Endothelial cell of umbilical vein (primary cell): ENCODE measurements at regions of chr19 and their contacts with region 1.

Region 1: DNA sequence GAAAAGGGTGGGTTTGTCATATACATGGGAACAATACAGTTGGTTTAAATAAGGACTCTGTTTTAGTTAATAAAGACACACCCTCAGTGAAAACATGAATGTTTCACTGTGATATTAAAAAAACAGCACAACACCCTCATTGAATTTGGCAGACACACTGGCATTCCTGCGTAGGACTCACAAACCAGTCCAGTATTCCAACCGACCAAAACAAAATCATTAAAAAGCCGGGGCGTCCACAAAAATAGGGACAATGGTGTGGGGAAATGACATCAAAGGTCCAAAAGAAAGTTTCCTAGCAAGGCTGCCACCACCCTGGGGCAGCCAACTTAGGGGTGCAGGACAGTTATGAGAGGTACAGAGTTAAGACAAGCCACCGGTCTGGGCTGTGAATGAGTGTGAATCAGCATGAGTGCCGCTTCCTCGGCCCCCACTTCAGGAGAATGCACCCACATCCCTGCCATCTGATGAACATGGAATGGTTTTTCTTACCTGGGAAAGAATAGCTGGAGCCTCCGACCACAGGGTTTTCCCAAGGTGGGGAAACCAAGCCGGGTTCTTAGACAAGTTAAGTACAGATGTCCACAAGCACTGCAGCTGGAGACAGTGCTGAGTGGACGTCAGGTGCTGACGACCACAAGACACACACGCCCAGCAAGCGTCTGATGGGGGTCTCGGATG is 73.3 kb downstream of the KLF2 start:
- DNase-seq: peak; percentile 59
- H3K4me3 ChIP-seq: no peak overlapping the region
- H3K27ac ChIP-seq: no peak overlapping the region
- H3K4me1 ChIP-seq: no peaks in the 10 kb centered on the region
- H3K27me3 ChIP-seq: no peaks in the 10 kb centered on the region
- CTCF ChIP-seq: no peak
- POLR2A ChIP-seq: no peak

Region 2: DNA sequence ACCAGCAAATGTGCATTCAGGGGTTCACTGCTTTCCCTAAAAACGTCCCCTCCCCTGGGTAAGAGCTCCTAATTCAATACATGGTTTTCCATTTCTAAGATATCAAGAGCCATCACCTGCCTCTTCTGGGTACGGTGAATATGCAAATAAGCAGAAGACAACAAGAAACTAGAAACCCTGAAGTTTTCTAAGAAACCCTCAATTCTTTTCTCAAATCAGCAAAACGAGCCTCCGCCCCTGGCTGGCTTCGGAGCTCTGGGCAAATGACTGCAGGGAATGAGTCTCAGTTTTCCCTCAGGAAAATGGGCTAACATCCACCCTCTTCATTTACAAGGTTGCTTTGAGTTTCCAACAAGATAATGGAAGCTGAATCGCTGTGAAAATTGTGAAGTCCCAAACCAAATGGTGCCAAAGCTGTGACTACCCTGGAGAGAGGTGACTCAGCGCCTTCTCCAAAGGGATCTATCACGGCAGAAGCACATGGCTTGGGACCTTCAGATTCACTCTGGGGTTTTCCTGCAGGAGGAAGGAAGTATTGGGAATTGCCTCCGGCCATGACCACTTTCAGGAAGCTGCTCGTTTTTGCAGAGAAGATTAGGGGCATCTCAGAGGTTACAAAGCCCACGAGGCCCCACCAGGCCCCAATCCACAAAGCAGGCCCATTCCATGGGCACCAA is 46.7 kb before region 1 on chr19:
- CTCF ChIA-PET with region 1: no interaction called
- POLR2A ChIA-PET with region 1: no interaction called
- dilution Hi-C with region 1: no loop called
- intact Hi-C with region 1: no loop called
- DNase-seq: peak; percentile 77
- H3K4me3 ChIP-seq: no peak overlapping the region
- H3K27ac ChIP-seq: peak overlapping the region; percentile 51
- H3K4me1 ChIP-seq: peaks cover 32% of the 10 kb centered on the region
- H3K27me3 ChIP-seq: no peaks in the 10 kb centered on the region
- CTCF ChIP-seq: no peak
- POLR2A ChIP-seq: no peak

Region 3: GRCh38 chr19:16417660-16418596 is 20.0 kb after region 1 on chr19:
- CTCF ChIA-PET with region 1: no interaction called
- POLR2A ChIA-PET with region 1: no interaction called
- dilution Hi-C with region 1: no loop called
- intact Hi-C with region 1: loop called (anchors 2 kb)
- DNase-seq: peak; percentile 51
- H3K4me3 ChIP-seq: no peak overlapping the region
- H3K27ac ChIP-seq: no peak overlapping the region
- H3K4me1 ChIP-seq: peaks cover 14% of the 10 kb centered on the region
- H3K27me3 ChIP-seq: no peaks in the 10 kb centered on the region
- CTCF ChIP-seq: peak; percentile 87 to 95
- POLR2A ChIP-seq: no peak